ENCODE measurements at regions of chr16 and their contacts with region 1.

Region 1: GRCh38 chr16:69123910-69124309 is 8.5 kb downstream of the CHTF8 start:
- DNase-seq: no peak
- H3K4me3 ChIP-seq: no peak overlapping the region
- H3K27ac ChIP-seq: no peak overlapping the region
- H3K4me1 ChIP-seq: peaks cover 17% of the 10 kb centered on the region
- H3K27me3 ChIP-seq: no peaks in the 10 kb centered on the region
- CTCF ChIP-seq: peak; percentile 74

Region 2: DNA sequence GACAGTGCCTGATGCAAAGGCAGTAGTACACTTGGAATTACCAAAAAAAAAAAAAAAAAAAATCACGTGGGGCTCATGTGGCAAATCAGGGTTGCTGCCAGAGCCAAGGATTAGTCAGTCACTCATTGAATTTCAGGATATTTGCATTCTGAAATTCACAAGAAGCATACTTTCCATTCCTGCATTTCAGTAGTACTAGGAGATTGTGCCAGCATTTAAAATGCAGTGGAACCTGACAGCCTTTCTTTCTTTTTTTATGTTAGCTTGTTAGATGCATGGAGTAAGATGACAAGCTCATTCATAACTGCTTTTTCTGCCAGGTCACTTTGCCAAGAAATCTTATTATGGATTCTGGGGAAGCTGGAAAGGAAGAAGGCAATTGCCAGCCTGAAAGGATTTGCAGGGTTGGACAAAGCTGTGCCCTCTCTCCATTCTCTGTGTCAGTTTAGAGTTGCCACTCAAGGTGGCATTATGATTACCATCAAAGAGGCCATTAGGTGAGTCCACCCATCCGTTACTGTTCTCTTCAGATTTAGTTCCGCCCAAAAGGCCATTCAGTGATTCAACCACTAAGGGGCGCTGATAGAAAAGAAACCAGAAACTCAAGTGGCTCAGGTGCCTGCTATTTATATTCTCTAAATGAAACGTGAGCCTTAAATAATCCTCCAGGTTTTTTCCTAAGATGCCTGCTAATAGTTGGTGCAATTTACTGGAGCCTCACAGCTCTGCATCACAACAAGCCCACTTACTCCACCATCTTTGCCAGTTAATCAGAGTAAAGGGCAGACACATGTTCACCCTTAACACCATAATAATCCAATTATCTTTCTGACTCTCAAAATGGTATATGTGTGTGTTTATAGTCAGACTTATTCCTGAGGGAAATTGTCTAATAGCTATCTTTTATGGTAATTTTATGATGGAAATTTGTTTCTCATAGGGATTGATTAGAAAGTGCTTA is 221.6 kb before region 1 on chr16:
- intact Hi-C with region 1: loop called (anchors 5 kb)
- DNase-seq: no peak
- H3K4me3 ChIP-seq: no peak overlapping the region
- H3K27ac ChIP-seq: no peak overlapping the region
- H3K4me1 ChIP-seq: no peaks in the 10 kb centered on the region
- H3K27me3 ChIP-seq: no peaks in the 10 kb centered on the region
- CTCF ChIP-seq: peak; percentile 75

Measured in left ventricle myocardium inferior (tissue), 1 donor.